ENCODE measurements at regions of chr9 and their contacts with region 1.

Region 1: DNA sequence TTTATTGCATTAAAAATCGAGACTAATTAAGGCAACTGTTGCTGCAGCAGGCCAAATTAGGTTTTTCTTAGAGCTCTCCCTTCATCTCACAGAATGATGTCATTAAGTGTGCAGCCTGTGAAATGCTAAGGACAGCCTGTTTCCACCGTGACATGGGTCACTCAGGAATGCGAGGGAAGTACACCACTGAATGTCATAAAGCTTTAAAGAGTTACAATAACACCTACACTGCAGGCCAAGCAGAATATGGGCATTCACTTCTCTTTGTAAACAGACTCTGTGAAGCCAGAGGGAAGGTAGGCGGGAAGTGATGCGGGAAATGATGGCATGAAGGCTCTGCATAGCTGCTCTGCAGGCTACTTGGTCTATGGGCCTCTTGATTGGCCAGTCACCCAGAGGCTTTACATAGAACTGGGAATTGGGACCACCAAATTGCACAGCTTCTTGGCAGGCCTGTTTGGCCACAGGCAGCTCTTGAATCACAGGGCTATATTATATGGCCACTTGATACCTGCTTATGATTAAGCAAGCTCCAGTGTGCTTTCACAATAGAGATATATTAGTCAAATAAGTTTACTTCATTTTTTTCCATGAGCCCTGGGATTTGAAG is 28.4 kb upstream of the AOPEP start:
- DNase-seq: no peak
- ATAC-seq: no peak
- H3K4me3 ChIP-seq: no peak overlapping the region
- H3K4me3 Mint-ChIP-seq: no peak overlapping the region
- H3K27ac ChIP-seq: no peak overlapping the region
- H3K27ac Mint-ChIP-seq: no peak overlapping the region
- H3K4me1 ChIP-seq: no peaks in the 10 kb centered on the region
- H3K4me1 Mint-ChIP-seq: no peaks in the 10 kb centered on the region
- H3K27me3 ChIP-seq: no peaks in the 10 kb centered on the region
- H3K27me3 Mint-ChIP-seq: peaks cover 10 to 19% of the 10 kb centered on the region in 2 donors
- CTCF ChIP-seq: no peak

Region 2: GRCh38 chr9:93978551-93978950 is 719.5 kb before region 1 on chr9:
- intact Hi-C with region 1: no loop called
- DNase-seq: no peak
- ATAC-seq: no peak
- H3K4me3 ChIP-seq: no peak overlapping the region
- H3K4me3 Mint-ChIP-seq: no peak overlapping the region
- H3K27ac ChIP-seq: no peak overlapping the region
- H3K27ac Mint-ChIP-seq: no peak overlapping the region
- H3K4me1 ChIP-seq: no peaks in the 10 kb centered on the region
- H3K4me1 Mint-ChIP-seq: no peaks in the 10 kb centered on the region
- H3K27me3 ChIP-seq: no peaks in the 10 kb centered on the region
- H3K27me3 Mint-ChIP-seq: peaks cover 19 to 39% of the 10 kb centered on the region in 2 donors
- CTCF ChIP-seq: no peak

Region 3: GRCh38 chr9:94754976-94755475 is 56.9 kb after region 1 on chr9:
- intact Hi-C with region 1: loop called (anchors 5 kb)
- DNase-seq: no peak
- ATAC-seq: no peak
- H3K4me3 ChIP-seq: no peak overlapping the region
- H3K4me3 Mint-ChIP-seq: no peak overlapping the region
- H3K27ac ChIP-seq: no peak overlapping the region
- H3K27ac Mint-ChIP-seq: no peak overlapping the region
- H3K4me1 ChIP-seq: no peaks in the 10 kb centered on the region
- H3K4me1 Mint-ChIP-seq: peaks cover 5 to 6% of the 10 kb centered on the region in 2 donors
- H3K27me3 ChIP-seq: no peaks in the 10 kb centered on the region
- H3K27me3 Mint-ChIP-seq: no peaks in the 10 kb centered on the region
- CTCF ChIP-seq: no peak

Region 4: DNA sequence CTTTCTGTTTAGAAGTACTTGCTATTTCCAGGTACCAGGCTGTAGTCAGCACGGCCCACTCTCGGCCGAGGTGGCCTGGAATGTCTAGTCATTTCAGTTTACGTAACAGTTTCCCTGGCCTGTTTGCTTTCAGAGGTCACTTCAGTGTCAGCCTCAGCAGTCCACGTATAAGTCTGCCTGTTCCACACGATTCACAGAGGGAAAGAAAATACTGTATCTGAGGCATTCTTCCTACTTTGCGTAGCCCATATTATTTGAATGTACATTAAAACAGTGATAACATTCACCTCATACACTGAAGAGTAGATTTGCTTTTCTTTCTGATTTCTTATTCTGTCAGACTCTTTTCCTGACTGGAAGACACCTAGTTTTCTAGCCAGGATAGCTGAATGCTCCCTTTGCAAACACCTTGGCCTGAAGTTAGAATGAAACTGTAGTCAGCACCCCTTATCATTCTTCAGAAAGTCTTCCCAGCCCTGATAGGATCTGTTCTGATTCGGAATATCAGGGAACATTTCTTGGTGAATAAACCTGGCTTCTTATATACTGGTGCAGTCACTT is 169.3 kb after region 1 on chr9:
- intact Hi-C with region 1: no loop called
- DNase-seq: no peak
- ATAC-seq: no peak
- H3K4me3 ChIP-seq: no peak overlapping the region
- H3K4me3 Mint-ChIP-seq: no peak overlapping the region
- H3K27ac ChIP-seq: no peak overlapping the region
- H3K27ac Mint-ChIP-seq: no peak overlapping the region
- H3K4me1 ChIP-seq: peaks cover 21% of the 10 kb centered on the region
- H3K4me1 Mint-ChIP-seq: peaks cover 38 to 39% of the 10 kb centered on the region in 2 donors
- H3K27me3 ChIP-seq: no peaks in the 10 kb centered on the region
- H3K27me3 Mint-ChIP-seq: no peaks in the 10 kb centered on the region
- CTCF ChIP-seq: no peak